ENCODE measurements at regions of chr4 and their contacts with region 1.

Region 1: GRCh38 chr4:183504064-183504929 is 561 bp upstream of the ING2 start:
- DNase-seq: peak; percentile 95
- ATAC-seq: peak; percentile 75
- H3K4me3 ChIP-seq: peak overlapping the region; percentile 93
- H3K27ac ChIP-seq: peak overlapping the region; percentile 65
- H3K4me1 ChIP-seq: peaks cover 14% of the 10 kb centered on the region
- H3K27me3 ChIP-seq: no peaks in the 10 kb centered on the region
- CTCF ChIP-seq: no peak

Region 2: DNA sequence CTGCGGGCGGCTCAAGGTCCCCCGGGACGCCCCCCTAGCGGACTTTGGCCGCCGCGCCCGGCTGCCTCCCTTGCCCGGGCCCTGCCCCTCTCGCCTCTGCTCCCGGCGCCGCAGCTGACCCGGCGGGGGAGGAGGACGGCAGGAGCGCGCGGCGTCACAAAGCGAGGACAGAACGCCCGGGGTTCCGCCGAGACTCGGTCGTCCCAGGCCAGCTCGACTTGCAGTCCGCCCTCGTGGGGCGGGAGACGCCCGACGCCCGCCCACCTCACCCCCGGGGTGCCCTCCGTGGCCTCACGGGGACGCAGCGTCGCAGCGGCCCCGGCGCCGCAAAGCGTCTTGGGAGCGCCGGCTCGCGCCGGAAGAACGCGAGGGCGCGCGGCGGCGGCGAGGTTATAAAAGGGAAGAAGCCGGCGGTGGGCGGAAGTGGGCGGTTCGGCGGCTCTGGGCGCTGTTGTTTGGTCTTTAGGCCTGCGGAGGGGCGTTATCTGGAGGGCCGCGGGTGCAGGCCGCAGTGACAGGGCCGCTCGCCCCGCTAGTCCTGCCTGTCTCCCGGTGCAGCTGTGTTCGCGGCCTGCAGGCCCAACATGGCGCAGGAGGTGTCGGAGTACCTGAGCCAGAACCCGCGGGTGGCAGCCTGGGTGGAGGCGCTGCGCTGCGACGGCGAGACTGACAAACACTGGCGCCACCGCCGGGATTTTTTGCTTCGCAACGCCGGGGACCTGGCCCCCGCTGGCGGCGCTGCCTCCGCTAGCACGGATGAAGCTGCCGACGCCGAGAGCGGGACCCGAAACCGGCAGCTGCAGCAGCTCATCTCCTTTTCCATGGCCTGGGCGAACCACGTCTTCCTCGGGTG is 59.9 kb before region 1 on chr4 and contains the start of gene CDKN2AIP:
- CTCF ChIA-PET with region 1: no interaction called
- POLR2A ChIA-PET with region 1: no interaction called
- intact Hi-C with region 1: loop called (anchors 2 kb)
- DNase-seq: peak; percentile 92
- ATAC-seq: peak; percentile 88
- H3K4me3 ChIP-seq: peak within 1 kb of the TSS; percentile 83
- H3K27ac ChIP-seq: peak within 1 kb of the TSS; percentile 97
- H3K4me1 ChIP-seq: peaks cover 45% of the 10 kb centered on the region
- H3K27me3 ChIP-seq: no peaks in the 10 kb centered on the region
- CTCF ChIP-seq: no peak
- total RNA-seq, gene CDKN2AIP: 21.2 and 31.5 TPM in 2 replicates

Region 3: DNA sequence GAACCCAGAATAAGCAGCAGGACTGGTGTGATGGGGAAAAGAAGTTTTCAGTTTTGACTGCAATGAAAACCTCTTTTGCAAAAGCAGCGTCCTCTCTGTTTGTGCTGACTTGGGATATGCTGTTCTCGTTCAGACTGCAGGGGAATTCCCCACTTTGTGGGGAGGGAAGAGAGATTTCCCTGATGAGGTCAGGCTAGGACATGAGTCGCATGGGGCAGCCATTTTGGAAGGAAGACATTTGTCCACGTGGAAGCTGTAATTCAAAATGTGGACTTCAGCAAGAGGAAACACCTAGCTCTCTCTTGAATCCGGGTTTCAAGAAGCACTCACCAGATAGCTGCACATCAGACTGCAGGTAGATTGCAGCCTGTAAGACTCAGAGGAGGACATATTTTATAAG is 39.8 kb after region 1 on chr4:
- CTCF ChIA-PET with region 1: no interaction called
- POLR2A ChIA-PET with region 1: no interaction called
- intact Hi-C with region 1: no loop called
- DNase-seq: no peak
- ATAC-seq: no peak
- H3K4me3 ChIP-seq: no peak overlapping the region
- H3K27ac ChIP-seq: no peak overlapping the region
- H3K4me1 ChIP-seq: no peaks in the 10 kb centered on the region
- H3K27me3 ChIP-seq: no peaks in the 10 kb centered on the region
- CTCF ChIP-seq: no peak

Region 4: GRCh38 chr4:183602557-183603027 is 98.3 kb after region 1 on chr4:
- CTCF ChIA-PET with region 1: interaction called, 3 read pairs
- POLR2A ChIA-PET with region 1: no interaction called
- intact Hi-C with region 1: loop called (anchors 10 kb)
- DNase-seq: no peak
- ATAC-seq: no peak
- H3K4me3 ChIP-seq: no peak overlapping the region
- H3K27ac ChIP-seq: no peak overlapping the region
- H3K4me1 ChIP-seq: 0 out of 2 replicates have a peak, but pooled peaks cover under 1% of the 10 kb centered on the region
- H3K27me3 ChIP-seq: no peaks in the 10 kb centered on the region
- CTCF ChIP-seq: peak; percentile 47; the same call in 1 of the 2 replicates

Region 5: DNA sequence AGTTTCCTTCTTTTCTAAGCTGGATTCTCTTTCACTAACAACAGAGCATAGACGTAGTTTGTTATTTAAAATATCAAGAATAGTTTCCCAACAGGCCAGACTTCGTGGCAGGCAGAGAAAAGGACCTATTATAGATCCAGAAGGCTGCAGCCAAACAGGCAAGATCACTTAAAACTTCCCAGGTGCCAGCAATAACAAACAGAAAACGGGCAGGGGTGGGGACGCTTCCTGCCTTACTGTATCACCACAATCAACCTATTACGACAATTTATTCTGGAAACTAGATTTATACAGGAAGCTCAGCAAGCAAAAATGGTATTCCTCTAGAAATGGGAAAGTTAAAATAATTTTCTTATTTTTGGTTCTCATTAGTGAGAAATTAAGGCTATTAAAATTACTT is 132.6 kb after region 1 on chr4:
- CTCF ChIA-PET with region 1: no interaction called
- POLR2A ChIA-PET with region 1: interaction called, 4 read pairs
- intact Hi-C with region 1: loop called (anchors 5 kb)
- DNase-seq: peak; percentile 49
- ATAC-seq: peak; percentile 83
- H3K4me3 ChIP-seq: peak overlapping the region; percentile 36
- H3K27ac ChIP-seq: peak overlapping the region; percentile 71
- H3K4me1 ChIP-seq: peaks cover 26% of the 10 kb centered on the region
- H3K27me3 ChIP-seq: no peaks in the 10 kb centered on the region
- CTCF ChIP-seq: no peak

Region 6: DNA sequence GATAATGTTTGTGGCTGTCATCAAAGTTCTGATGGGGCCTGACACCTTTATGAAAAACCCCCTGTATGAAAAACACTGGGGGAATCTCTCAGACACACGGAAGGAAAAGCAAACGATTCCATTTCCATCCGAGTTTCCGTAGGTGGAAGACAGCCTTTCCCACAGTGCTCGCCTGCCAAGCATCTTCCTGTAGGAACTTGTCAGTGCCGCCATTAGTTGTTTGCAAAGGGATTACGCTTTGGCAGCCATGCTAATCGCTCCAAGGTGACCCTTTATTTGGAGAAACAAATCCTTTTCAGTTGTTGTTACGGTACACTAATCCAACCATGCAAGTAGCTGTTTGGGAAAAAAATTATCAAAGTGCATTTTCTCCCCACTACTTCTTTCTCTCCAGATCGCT is 356.4 kb after region 1 on chr4:
- CTCF ChIA-PET with region 1: no interaction called
- POLR2A ChIA-PET with region 1: no interaction called
- intact Hi-C with region 1: no loop called
- DNase-seq: no peak
- ATAC-seq: no peak
- H3K4me3 ChIP-seq: no peak overlapping the region
- H3K27ac ChIP-seq: no peak overlapping the region
- H3K4me1 ChIP-seq: no peaks in the 10 kb centered on the region
- H3K27me3 ChIP-seq: peaks cover 66% of the 10 kb centered on the region
- CTCF ChIP-seq: no peak

Region 7: DNA sequence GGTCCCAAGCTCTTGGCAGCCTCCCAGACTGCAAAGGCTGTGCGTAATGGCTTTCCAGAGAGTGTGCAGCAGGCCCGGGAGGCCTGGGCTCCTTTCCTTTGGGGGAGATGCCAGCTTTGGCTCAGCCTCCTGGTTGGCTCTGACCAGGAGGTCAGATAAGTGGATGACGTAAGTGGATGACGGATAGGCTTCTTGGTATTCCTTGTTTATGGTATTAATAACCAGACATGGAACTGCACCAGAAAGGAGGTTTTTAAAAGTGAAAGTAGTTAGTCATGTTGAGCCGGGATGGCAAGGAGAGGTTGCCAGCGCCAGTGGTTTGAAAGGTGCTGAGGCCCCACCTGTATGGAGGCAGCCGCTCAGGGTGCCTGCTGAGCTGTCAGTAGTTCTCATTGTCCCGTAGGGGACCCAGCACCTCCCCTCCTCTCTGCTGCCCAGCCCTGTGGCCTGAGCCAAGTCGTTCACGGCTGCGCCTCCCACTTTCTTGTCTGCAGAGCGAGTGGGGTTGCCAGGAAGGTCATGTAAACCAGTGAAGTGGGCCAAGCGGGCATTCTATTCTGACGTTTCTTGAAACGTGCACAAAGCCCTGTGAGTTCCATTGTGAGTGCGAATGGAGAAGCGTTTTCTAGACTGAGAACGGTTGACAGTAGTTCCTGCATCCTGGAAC is 372.1 kb after region 1 on chr4:
- CTCF ChIA-PET with region 1: no interaction called
- POLR2A ChIA-PET with region 1: no interaction called
- intact Hi-C with region 1: no loop called
- DNase-seq: peak; percentile 16
- ATAC-seq: no peak
- H3K4me3 ChIP-seq: peak overlapping the region; percentile 32; the same call in 1 of the 2 replicates
- H3K27ac ChIP-seq: no peak overlapping the region
- H3K4me1 ChIP-seq: no peaks in the 10 kb centered on the region
- H3K27me3 ChIP-seq: peaks cover 21% of the 10 kb centered on the region; the same call in 1 of the 2 replicates
- CTCF ChIP-seq: no peak

Measured in PC-3 (cell line).